PC-9 (cell line): ENCODE measurements at regions of chr1 and their contacts with region 1.

Region 1: GRCh38 chr1:45303582-45304310 is 22.9 kb upstream of the HPDL start:
- DNase-seq: peak; percentile 89 to 96
- H3K4me3 ChIP-seq: peak overlapping the region; percentile 60
- H3K27ac ChIP-seq: peak overlapping the region; percentile 72
- H3K4me1 ChIP-seq: peaks cover 10% of the 10 kb centered on the region
- H3K27me3 ChIP-seq: no peaks in the 10 kb centered on the region
- CTCF ChIP-seq: peak; percentile 69

Region 2: GRCh38 chr1:44730741-44731512 is 572.8 kb before region 1 on chr1 and contains the start of gene RNU5D-1:
- CTCF ChIA-PET with region 1: interaction called, 15 read pairs
- POLR2A ChIA-PET with region 1: interaction called, 10 read pairs
- intact Hi-C with region 1: loop called (anchors 2 kb)
- DNase-seq: peak; percentile 95 to 96
- H3K4me3 ChIP-seq: peak within 1 kb of the TSS; percentile 47; the same call in 1 of the 2 replicates
- H3K27ac ChIP-seq: peak within 1 kb of the TSS; percentile 98
- H3K4me1 ChIP-seq: peaks cover 54% of the 10 kb centered on the region
- H3K27me3 ChIP-seq: no peaks in the 10 kb centered on the region
- CTCF ChIP-seq: peak; percentile 92
- total RNA-seq, gene RNU5D-1: not detected in 2 replicates

Region 3: GRCh38 chr1:44862829-44863401 is 440.8 kb before region 1 on chr1:
- CTCF ChIA-PET with region 1: no interaction called
- POLR2A ChIA-PET with region 1: interaction called, 18 read pairs
- intact Hi-C with region 1: no loop called
- DNase-seq: no peak
- H3K4me3 ChIP-seq: no peak overlapping the region
- H3K27ac ChIP-seq: no peak overlapping the region
- H3K4me1 ChIP-seq: no peaks in the 10 kb centered on the region
- H3K27me3 ChIP-seq: no peaks in the 10 kb centered on the region
- CTCF ChIP-seq: no peak

Region 4: GRCh38 chr1:45033356-45033755 is 270.4 kb before region 1 on chr1:
- CTCF ChIA-PET with region 1: interaction called, 11 read pairs
- POLR2A ChIA-PET with region 1: no interaction called
- intact Hi-C with region 1: no loop called
- DNase-seq: no peak
- H3K4me3 ChIP-seq: no peak overlapping the region
- H3K27ac ChIP-seq: no peak overlapping the region
- H3K4me1 ChIP-seq: peaks cover 10% of the 10 kb centered on the region; the same call in 1 of the 2 replicates
- H3K27me3 ChIP-seq: no peaks in the 10 kb centered on the region
- CTCF ChIP-seq: no peak

Region 5: GRCh38 chr1:45410850-45411314 is 107.1 kb after region 1 on chr1:
- CTCF ChIA-PET with region 1: no interaction called
- POLR2A ChIA-PET with region 1: no interaction called
- intact Hi-C with region 1: loop called (anchors 5 kb)
- DNase-seq: peak; percentile 66 to 83
- H3K4me3 ChIP-seq: peak overlapping the region; percentile 10; the same call in 1 of the 2 replicates
- H3K27ac ChIP-seq: peak overlapping the region; percentile 68
- H3K4me1 ChIP-seq: peaks cover 30% of the 10 kb centered on the region
- H3K27me3 ChIP-seq: no peaks in the 10 kb centered on the region
- CTCF ChIP-seq: no peak

Region 6: GRCh38 chr1:45442272-45442671 is 138.5 kb after region 1 on chr1:
- CTCF ChIA-PET with region 1: no interaction called
- POLR2A ChIA-PET with region 1: no interaction called
- intact Hi-C with region 1: no loop called
- DNase-seq: peak in 1 of 2 experiments; percentile 71
- H3K4me3 ChIP-seq: no peak overlapping the region
- H3K27ac ChIP-seq: no peak overlapping the region
- H3K4me1 ChIP-seq: peaks cover 11% of the 10 kb centered on the region
- H3K27me3 ChIP-seq: no peaks in the 10 kb centered on the region
- CTCF ChIP-seq: no peak

Region 7: GRCh38 chr1:46173361-46173856 is 869.7 kb after region 1 on chr1:
- CTCF ChIA-PET with region 1: no interaction called
- POLR2A ChIA-PET with region 1: interaction called, 26 read pairs
- intact Hi-C with region 1: no loop called
- DNase-seq: no peak
- H3K4me3 ChIP-seq: no peak overlapping the region
- H3K27ac ChIP-seq: peak overlapping the region; percentile 99
- H3K4me1 ChIP-seq: peaks cover 86% of the 10 kb centered on the region
- H3K27me3 ChIP-seq: no peaks in the 10 kb centered on the region
- CTCF ChIP-seq: no peak